ENCODE measurements at regions of chr11 and their contacts with region 1.

Region 1: DNA sequence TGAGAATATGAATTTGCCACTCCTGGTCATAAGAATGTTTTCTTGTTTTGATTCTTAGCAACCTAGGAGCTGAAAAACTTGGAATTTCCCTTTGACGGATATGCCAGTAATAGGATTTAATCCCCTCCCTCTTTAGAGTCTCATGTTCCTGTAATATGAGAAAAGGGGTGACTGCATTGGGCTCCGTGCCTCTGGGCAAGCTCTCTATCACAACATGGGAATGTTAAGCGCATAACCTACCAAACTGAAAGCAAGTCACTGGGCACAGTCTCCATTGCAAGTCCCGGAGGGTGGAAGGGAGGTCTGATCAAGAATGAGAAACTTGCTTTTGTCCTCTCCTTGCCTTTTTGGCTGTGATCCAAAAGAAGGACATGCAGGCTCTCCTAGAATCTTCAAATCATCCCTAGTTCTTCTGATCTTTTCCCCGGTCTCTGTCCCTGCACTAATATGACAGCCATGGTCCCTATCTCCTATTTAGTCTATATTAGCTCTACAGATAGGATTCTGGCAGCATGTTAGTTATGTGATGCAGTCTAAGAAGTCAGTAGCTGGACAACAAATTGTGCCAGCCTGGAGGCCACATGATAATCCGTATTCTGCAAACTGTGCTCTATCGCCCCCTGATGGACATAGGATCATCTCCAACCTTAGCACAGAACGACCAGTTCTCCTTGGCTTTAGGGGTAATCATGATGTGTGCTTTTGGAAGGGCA is 11.7 kb downstream of the OR10D3 start:
- DNase-seq: peak; percentile 71
- H3K4me3 Mint-ChIP-seq: no peak overlapping the region
- H3K27ac Mint-ChIP-seq: no peak overlapping the region
- H3K4me1 Mint-ChIP-seq: no peaks in the 10 kb centered on the region
- H3K27me3 Mint-ChIP-seq: peaks cover 17% of the 10 kb centered on the region

Region 2: GRCh38 chr11:124108156-124108555 is 86.7 kb before region 1 on chr11:
- CTCF ChIA-PET with region 1: interaction called, 5 read pairs
- intact Hi-C with region 1: loop called (anchors 1 kb)
- DNase-seq: peak; percentile 48
- H3K4me3 Mint-ChIP-seq: no peak overlapping the region
- H3K27ac Mint-ChIP-seq: no peak overlapping the region
- H3K4me1 Mint-ChIP-seq: no peaks in the 10 kb centered on the region
- H3K27me3 Mint-ChIP-seq: peaks cover 20% of the 10 kb centered on the region